ENCODE measurements at regions of chr16 and their contacts with region 1.

Region 1: GRCh38 chr16:23496826-23497542 is 13.3 kb downstream of the GGA2 start:
- DNase-seq: peak; percentile 68 to 75
- H3K4me3 ChIP-seq: peak overlapping the region; percentile 13; the same call in 1 of the 2 replicates
- H3K4me3 Mint-ChIP-seq: peak overlapping the region; percentile 68
- H3K27ac Mint-ChIP-seq: peak overlapping the region; percentile 92
- H3K4me1 ChIP-seq: peaks cover 11% of the 10 kb centered on the region; the same call in 1 of the 2 replicates
- H3K4me1 Mint-ChIP-seq: peaks cover 10% of the 10 kb centered on the region
- H3K27me3 ChIP-seq: no peaks in the 10 kb centered on the region
- H3K27me3 Mint-ChIP-seq: no peaks in the 10 kb centered on the region
- CTCF ChIP-seq: no peak

Region 2: DNA sequence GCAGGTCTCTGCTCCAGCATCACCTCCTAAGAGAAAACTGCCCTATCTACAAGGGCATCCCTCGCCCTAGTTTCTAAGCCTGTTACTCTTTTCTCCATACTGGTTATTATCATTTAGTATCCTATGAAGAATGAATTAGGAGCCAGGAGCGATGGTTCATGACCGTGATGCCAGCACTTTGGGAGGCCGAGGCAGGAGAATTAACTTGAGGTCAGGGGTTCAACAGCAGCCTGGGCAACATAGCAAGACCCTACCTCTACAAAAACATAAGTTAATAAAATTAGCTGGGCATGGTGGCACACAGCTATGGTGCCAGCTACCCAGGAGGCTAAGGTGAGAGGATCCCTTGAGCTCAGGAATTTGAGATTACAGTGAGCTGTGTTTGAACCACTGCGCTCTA is 53.0 kb after region 1 on chr16:
- CTCF ChIA-PET with region 1: no interaction called
- POLR2A ChIA-PET with region 1: interaction called, 11 read pairs
- intact Hi-C with region 1: loop called (anchors 5 kb)
- DNase-seq: no peak
- H3K4me3 ChIP-seq: no peak overlapping the region
- H3K4me3 Mint-ChIP-seq: no peak overlapping the region
- H3K27ac Mint-ChIP-seq: no peak overlapping the region
- H3K4me1 ChIP-seq: no peaks in the 10 kb centered on the region
- H3K4me1 Mint-ChIP-seq: no peaks in the 10 kb centered on the region
- H3K27me3 ChIP-seq: no peaks in the 10 kb centered on the region
- H3K27me3 Mint-ChIP-seq: no peaks in the 10 kb centered on the region
- CTCF ChIP-seq: no peak

Measured in Caco-2 (cell line).